CD4-positive, alpha-beta T cell (primary cell): ENCODE measurements at regions of chr2 and their contacts with region 1.

Region 1: GRCh38 chr2:191302459-191303139 is 57.4 kb downstream of the MYO1B start:
- DNase-seq: peak in 8 of 14 experiments; percentile 1 to 58 (median 22)
- ATAC-seq: peak; percentile 44
- H3K4me3 ChIP-seq: no peak overlapping the region
- H3K4me3 Mint-ChIP-seq: no peak overlapping the region
- H3K27ac ChIP-seq: no peak overlapping the region
- H3K27ac Mint-ChIP-seq: no peak overlapping the region
- H3K4me1 ChIP-seq: no peaks in the 10 kb centered on the region
- H3K4me1 Mint-ChIP-seq: no peaks in the 10 kb centered on the region
- H3K27me3 ChIP-seq: no peaks in the 10 kb centered on the region
- H3K27me3 Mint-ChIP-seq: no peaks in the 10 kb centered on the region
- CTCF ChIP-seq: no peak

Region 2: DNA sequence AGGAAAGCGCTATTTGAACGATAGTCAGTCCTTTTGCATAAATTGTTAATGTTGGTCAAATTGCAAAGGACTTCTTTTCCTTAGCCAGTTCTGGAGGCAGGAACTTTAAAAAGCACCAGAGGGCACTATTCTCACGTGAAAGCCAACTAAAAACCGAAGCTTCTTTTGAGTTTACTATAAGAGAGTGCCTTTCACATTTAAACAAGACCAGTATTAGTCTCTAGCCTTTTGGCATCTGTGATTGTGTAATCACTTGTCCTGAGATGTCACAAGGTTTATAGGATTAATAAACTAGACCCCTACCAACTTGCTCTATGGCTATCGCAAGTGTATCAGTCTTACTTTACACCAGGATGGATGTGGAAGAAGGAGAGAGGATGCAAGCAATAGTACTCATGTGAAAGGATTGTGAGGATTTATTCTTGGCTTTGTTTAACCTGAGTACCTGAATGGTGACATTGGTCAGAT is 137.4 kb before region 1 on chr2:
- CTCF ChIA-PET with region 1: interaction called, 11 read pairs
- POLR2A ChIA-PET with region 1: no interaction called
- intact Hi-C with region 1: loop called (anchors 2 to 5 kb)
- DNase-seq: peak in 6 of 14 experiments; percentile 18 to 73 (median 52)
- ATAC-seq: peak; percentile 75
- H3K4me3 ChIP-seq: no peak overlapping the region
- H3K4me3 Mint-ChIP-seq: no peak overlapping the region
- H3K27ac ChIP-seq: no peak overlapping the region
- H3K27ac Mint-ChIP-seq: no peak overlapping the region
- H3K4me1 ChIP-seq: no peaks in the 10 kb centered on the region
- H3K4me1 Mint-ChIP-seq: peaks cover 6% of the 10 kb centered on the region
- H3K27me3 ChIP-seq: no peaks in the 10 kb centered on the region
- H3K27me3 Mint-ChIP-seq: no peaks in the 10 kb centered on the region
- CTCF ChIP-seq: peak; percentile 85